Natural killer cell (primary cell): ENCODE measurements at regions of chr12 and their contacts with region 1.

Region 1: GRCh38 chr12:53791735-53792326 is 40.1 kb upstream of the CISTR start:
- DNase-seq: peak; percentile 20 to 63
- ATAC-seq: no peak
- H3K4me3 ChIP-seq: no peak overlapping the region
- H3K4me3 Mint-ChIP-seq: no peak overlapping the region
- H3K27ac ChIP-seq: no peak overlapping the region
- H3K27ac Mint-ChIP-seq: no peak overlapping the region
- H3K4me1 ChIP-seq: no peaks in the 10 kb centered on the region
- H3K4me1 Mint-ChIP-seq: no peaks in the 10 kb centered on the region
- H3K27me3 ChIP-seq: peaks cover 9% of the 10 kb centered on the region
- H3K27me3 Mint-ChIP-seq: peaks cover 19 to 33% of the 10 kb centered on the region in 2 donors
- CTCF ChIP-seq: peak; percentile 70

Region 2: GRCh38 chr12:53775478-53776145 is 16.2 kb before region 1 on chr12:
- intact Hi-C with region 1: no loop called
- DNase-seq: no peak
- ATAC-seq: no peak
- H3K4me3 ChIP-seq: no peak overlapping the region
- H3K4me3 Mint-ChIP-seq: no peak overlapping the region
- H3K27ac ChIP-seq: no peak overlapping the region
- H3K27ac Mint-ChIP-seq: no peak overlapping the region
- H3K4me1 ChIP-seq: no peaks in the 10 kb centered on the region
- H3K4me1 Mint-ChIP-seq: no peaks in the 10 kb centered on the region
- H3K27me3 ChIP-seq: peaks cover 6% of the 10 kb centered on the region
- H3K27me3 Mint-ChIP-seq: peaks cover 33 to 41% of the 10 kb centered on the region in 2 donors
- CTCF ChIP-seq: no peak

Region 3: GRCh38 chr12:53984901-53985709 is 193.3 kb after region 1 on chr12 and contains the start of gene HOXC10:
- intact Hi-C with region 1: loop called (anchors 10 kb)
- DNase-seq: peak; percentile 76 to 84
- ATAC-seq: peak; percentile 76 to 80 (median 78)
- H3K4me3 ChIP-seq: no peak within 1 kb of the TSS
- H3K4me3 Mint-ChIP-seq: peak within 1 kb of the TSS; percentile 67
- H3K27ac ChIP-seq: no peak within 1 kb of the TSS
- H3K27ac Mint-ChIP-seq: peak within 1 kb of the TSS; percentile 63 to 72
- H3K4me1 ChIP-seq: peaks cover 30% of the 10 kb centered on the region
- H3K4me1 Mint-ChIP-seq: peaks cover 24 to 43% of the 10 kb centered on the region in 2 donors
- H3K27me3 ChIP-seq: peaks cover 86% of the 10 kb centered on the region
- H3K27me3 Mint-ChIP-seq: peaks cover 88 to 89% of the 10 kb centered on the region in 2 donors
- CTCF ChIP-seq: peak; percentile 45
- total RNA-seq, gene HOXC10: not detected

Region 4: DNA sequence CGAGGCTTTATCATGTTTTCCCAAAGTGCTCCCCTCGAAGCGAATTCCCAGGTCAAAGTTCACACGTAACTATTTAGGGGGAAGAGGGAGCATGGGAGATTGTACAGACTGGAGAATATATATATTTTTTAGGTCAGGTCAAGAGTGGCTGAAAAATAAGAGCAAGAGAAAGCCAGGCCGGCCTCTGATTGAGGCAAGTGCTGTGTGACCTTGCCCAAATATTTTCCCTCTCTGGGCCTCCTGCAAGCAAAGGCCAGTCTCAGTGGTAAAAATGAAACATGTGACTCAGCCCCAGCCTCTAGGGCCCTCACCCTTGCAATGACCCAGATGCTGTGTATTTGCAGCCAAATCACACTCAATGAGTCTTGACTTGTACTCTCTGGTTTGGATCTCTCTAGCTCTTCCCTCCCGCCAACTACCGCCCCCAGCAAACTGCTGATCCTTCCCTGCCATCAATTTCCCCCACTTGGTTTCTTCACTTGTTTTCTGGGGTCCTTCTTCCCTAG is 362.9 kb after region 1 on chr12:
- intact Hi-C with region 1: no loop called
- DNase-seq: no peak
- ATAC-seq: no peak
- H3K4me3 ChIP-seq: no peak overlapping the region
- H3K4me3 Mint-ChIP-seq: no peak overlapping the region
- H3K27ac ChIP-seq: no peak overlapping the region
- H3K27ac Mint-ChIP-seq: no peak overlapping the region
- H3K4me1 ChIP-seq: no peaks in the 10 kb centered on the region
- H3K4me1 Mint-ChIP-seq: no peaks in the 10 kb centered on the region
- H3K27me3 ChIP-seq: no peaks in the 10 kb centered on the region
- H3K27me3 Mint-ChIP-seq: peaks cover 11 to 32% of the 10 kb centered on the region in 2 donors
- CTCF ChIP-seq: no peak